ENCODE measurements at regions of chr3 and their contacts with region 1.

Region 1: DNA sequence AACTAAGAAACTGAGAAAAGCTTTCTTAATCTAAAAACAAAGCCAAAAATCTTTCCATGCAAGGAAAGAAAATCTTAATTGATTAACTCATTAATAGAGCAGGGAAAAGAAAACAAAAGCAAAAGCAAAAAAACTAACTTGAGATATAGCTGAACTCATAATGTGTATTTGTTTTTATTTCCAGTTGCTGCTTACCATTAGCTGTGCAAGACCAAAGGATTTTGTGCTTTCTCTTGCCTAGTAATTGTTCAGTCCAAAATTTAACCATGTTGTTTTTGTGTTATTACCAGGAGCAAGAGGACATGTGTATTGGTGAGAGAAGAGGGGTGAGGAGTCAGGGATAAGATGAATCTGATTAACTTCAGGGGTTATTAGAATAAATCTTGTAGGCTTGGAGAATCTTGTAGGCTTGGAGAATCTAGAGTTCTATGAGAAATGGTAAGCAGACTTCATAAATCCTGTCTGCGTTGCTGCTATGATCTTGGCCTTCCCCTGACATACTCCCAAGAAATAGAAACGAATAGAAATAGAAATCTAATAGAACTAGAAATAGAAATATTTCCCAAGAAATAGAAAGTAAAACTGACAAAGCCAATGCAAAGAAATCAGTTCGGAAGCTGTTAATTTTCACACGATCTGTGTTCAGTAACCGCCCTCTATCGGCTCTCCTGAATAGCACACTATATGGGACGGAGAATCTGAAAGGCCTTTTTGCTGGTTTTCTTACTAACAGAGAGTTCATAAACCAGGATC is 72.6 kb upstream of the TNFSF10 start:
- DNase-seq: peak in 9 of 14 experiments; percentile 10 to 82 (median 38)
- ATAC-seq: peak; percentile 66
- H3K4me3 ChIP-seq: peak overlapping the region; percentile 49
- H3K4me3 Mint-ChIP-seq: peak overlapping the region; percentile 89
- H3K27ac ChIP-seq: peak overlapping the region; percentile 38 to 51
- H3K27ac Mint-ChIP-seq: peak overlapping the region; percentile 83
- H3K4me1 ChIP-seq: peaks cover 40% of the 10 kb centered on the region
- H3K4me1 Mint-ChIP-seq: peaks cover 54% of the 10 kb centered on the region
- H3K27me3 ChIP-seq: no peaks in the 10 kb centered on the region
- H3K27me3 Mint-ChIP-seq: no peaks in the 10 kb centered on the region
- CTCF ChIP-seq: peak; percentile 90

Region 2: GRCh38 chr3:172332256-172333041 is 263.4 kb before region 1 on chr3:
- CTCF ChIA-PET with region 1: interaction called, 3 read pairs
- POLR2A ChIA-PET with region 1: no interaction called
- intact Hi-C with region 1: loop called in 1 of 2 experiments (anchors 5 kb)
- DNase-seq: peak; percentile 21 to 74 (median 40)
- ATAC-seq: peak; percentile 77
- H3K4me3 ChIP-seq: no peak overlapping the region
- H3K4me3 Mint-ChIP-seq: no peak overlapping the region
- H3K27ac ChIP-seq: no peak overlapping the region
- H3K27ac Mint-ChIP-seq: no peak overlapping the region
- H3K4me1 ChIP-seq: no peaks in the 10 kb centered on the region
- H3K4me1 Mint-ChIP-seq: peaks cover 6% of the 10 kb centered on the region
- H3K27me3 ChIP-seq: no peaks in the 10 kb centered on the region
- H3K27me3 Mint-ChIP-seq: no peaks in the 10 kb centered on the region
- CTCF ChIP-seq: peak; percentile 94

Region 3: DNA sequence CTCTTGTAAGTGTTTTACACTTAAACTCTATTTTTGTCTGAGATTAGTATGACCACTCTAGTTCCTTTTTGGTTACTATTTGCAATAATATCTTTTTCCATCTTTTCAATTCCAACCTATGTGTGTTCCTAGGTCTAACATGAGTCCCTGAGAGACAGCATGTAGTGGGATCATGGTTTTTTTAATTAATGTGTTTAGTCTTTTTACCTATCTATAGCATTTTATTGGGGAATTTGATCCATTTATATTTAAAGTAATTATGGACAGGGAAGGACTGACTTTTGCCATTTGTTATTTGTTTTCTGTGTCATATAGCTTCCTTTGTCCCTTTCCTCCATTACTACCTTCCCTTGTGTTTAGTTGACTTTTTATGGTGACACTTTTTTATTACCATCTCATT is 94.3 kb before region 1 on chr3:
- CTCF ChIA-PET with region 1: interaction called, 17 read pairs
- POLR2A ChIA-PET with region 1: interaction called, 7 read pairs
- intact Hi-C with region 1: no loop called
- DNase-seq: no peak
- ATAC-seq: no peak
- H3K4me3 ChIP-seq: no peak overlapping the region
- H3K4me3 Mint-ChIP-seq: no peak overlapping the region
- H3K27ac ChIP-seq: no peak overlapping the region
- H3K27ac Mint-ChIP-seq: no peak overlapping the region
- H3K4me1 ChIP-seq: no peaks in the 10 kb centered on the region
- H3K4me1 Mint-ChIP-seq: no peaks in the 10 kb centered on the region
- H3K27me3 ChIP-seq: no peaks in the 10 kb centered on the region
- H3K27me3 Mint-ChIP-seq: no peaks in the 10 kb centered on the region
- CTCF ChIP-seq: no peak

Region 4: DNA sequence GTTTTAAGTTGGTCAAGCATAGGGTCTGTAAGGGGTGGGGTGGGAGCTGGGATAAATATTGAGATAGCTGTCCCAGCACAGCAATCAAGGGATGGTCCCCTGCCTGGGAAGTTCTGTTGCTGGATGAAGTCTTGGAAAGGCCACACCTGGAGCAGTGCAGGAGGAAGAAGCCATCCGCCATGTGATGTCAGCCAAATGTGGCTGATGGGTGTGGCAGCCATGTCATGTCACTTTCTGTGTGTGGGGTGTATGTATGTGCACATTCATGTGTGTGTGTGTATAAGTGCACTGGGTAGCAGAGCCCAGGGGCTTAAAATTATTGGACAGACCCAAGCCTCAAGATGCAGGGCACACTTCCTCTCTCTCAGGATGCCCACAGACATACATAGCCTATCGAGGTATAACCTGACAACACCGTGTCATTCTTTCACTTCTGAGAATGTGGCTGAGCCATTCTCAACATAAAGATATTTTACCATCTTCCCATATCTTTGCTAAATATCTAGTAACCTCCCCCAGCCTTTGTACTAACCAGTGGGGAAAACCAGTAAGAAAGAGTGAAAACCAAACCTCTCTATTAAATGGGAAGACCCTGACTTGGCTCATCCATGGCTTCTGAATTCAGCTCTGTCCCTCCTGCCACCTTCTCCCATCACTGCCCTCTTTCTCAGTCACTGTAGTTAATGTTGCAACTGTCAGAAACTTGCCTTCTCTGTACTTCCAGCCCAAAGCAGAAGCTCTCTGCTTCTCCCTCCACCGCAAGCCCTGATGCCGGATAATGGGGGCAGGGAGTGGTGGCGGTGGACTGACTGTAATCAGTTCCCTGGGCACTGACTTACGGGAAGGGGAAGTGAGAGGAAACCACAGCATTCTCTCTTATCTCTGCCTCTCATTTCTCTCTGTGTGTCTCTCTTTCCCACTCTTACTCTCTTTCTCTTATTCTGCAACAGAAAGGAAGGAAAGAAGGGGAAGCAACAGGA is 83.7 kb before region 1 on chr3:
- CTCF ChIA-PET with region 1: interaction called, 11 read pairs
- POLR2A ChIA-PET with region 1: interaction called, 48 read pairs
- intact Hi-C with region 1: no loop called
- DNase-seq: peak in 12 of 14 experiments; percentile 36 to 80 (median 58)
- ATAC-seq: peak; percentile 64
- H3K4me3 ChIP-seq: peak overlapping the region; percentile 15
- H3K4me3 Mint-ChIP-seq: peak overlapping the region; percentile 67
- H3K27ac ChIP-seq: peak overlapping the region; percentile 57 to 67
- H3K27ac Mint-ChIP-seq: peak overlapping the region; percentile 93
- H3K4me1 ChIP-seq: peaks cover 63% of the 10 kb centered on the region
- H3K4me1 Mint-ChIP-seq: peaks cover 73% of the 10 kb centered on the region
- H3K27me3 ChIP-seq: no peaks in the 10 kb centered on the region
- H3K27me3 Mint-ChIP-seq: no peaks in the 10 kb centered on the region
- CTCF ChIP-seq: no peak

Region 5: GRCh38 chr3:172522871-172523818 is 72.7 kb before region 1 on chr3 and contains the start of gene TNFSF10:
- CTCF ChIA-PET with region 1: interaction called, 17 read pairs
- POLR2A ChIA-PET with region 1: interaction called, 40 read pairs
- intact Hi-C with region 1: no loop called
- DNase-seq: peak in 13 of 14 experiments; percentile 29 to 89 (median 53)
- ATAC-seq: peak; percentile 73
- H3K4me3 ChIP-seq: peak within 1 kb of the TSS; percentile 64
- H3K4me3 Mint-ChIP-seq: peak within 1 kb of the TSS; percentile 91
- H3K27ac ChIP-seq: peak within 1 kb of the TSS; percentile 57 to 65
- H3K27ac Mint-ChIP-seq: peak within 1 kb of the TSS; percentile 93
- H3K4me1 ChIP-seq: peaks cover 29% of the 10 kb centered on the region
- H3K4me1 Mint-ChIP-seq: peaks cover 70% of the 10 kb centered on the region
- H3K27me3 ChIP-seq: no peaks in the 10 kb centered on the region
- H3K27me3 Mint-ChIP-seq: no peaks in the 10 kb centered on the region
- CTCF ChIP-seq: no peak
- total RNA-seq, gene TNFSF10: 9.2 to 9.5 TPM

Region 6: DNA sequence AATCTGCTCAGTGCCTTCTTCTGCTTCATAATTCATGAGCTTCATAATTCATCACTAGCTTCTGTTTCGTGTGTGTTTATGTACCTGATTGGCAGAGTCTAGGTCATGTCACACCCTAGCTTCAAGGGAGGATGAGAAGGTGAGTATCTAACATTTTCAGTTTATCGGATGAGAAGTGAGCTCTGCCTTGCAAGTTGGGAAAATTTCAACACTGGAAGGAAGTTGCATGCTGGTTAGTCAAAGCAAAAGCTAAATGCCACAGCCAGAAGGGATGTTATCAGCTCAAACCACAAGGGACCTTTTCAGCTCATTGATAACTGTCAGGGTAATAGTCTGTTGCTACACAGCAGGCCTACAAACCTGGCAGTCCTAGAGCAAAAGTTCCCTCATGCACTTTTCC is 65.3 kb before region 1 on chr3:
- CTCF ChIA-PET with region 1: interaction called, 17 read pairs
- POLR2A ChIA-PET with region 1: interaction called, 5 read pairs
- intact Hi-C with region 1: no loop called
- DNase-seq: peak in 4 of 14 experiments; percentile 27 to 56 (median 55)
- ATAC-seq: peak; percentile 70
- H3K4me3 ChIP-seq: no peak overlapping the region
- H3K4me3 Mint-ChIP-seq: peak overlapping the region; percentile 46
- H3K27ac ChIP-seq: no peak overlapping the region
- H3K27ac Mint-ChIP-seq: peak overlapping the region; percentile 77
- H3K4me1 ChIP-seq: peaks cover 15% of the 10 kb centered on the region
- H3K4me1 Mint-ChIP-seq: peaks cover 31% of the 10 kb centered on the region
- H3K27me3 ChIP-seq: no peaks in the 10 kb centered on the region
- H3K27me3 Mint-ChIP-seq: no peaks in the 10 kb centered on the region
- CTCF ChIP-seq: no peak

Region 7: DNA sequence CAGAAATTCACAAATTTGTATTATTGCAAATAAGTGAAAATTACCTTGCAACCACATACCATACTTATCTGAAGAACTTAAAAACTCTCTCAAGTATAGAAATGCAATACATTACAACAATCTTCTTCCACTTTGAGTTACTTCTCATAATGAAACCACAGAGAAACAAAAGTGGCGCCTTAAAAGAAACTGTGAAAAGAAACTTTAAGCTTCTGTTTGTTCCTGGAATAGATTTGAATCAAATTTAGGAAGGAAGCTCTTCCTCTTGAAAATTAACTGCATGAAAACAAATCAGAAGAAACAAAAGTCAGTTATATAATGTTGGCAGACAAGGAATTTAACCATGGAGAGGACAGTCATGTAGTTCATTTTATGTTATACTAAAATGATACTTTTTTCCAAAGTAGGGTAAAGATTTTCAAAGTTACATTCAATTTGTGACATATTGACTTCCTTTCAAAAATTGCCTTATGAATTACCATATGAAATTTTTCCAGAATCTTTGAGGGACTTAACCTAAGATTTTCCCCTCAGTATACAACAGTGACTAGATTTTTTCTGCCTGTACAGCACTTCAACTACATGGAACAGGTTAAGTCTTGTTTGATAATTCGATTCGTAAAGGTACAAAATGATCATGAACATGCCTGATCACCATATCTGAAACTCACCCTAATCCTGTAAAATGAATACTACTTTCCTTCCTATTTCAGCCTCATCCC is 15.0 kb before region 1 on chr3:
- CTCF ChIA-PET with region 1: interaction called, 8 read pairs
- POLR2A ChIA-PET with region 1: interaction called, 10 read pairs
- intact Hi-C with region 1: no loop called
- DNase-seq: peak in 1 of 14 experiments; percentile 59
- ATAC-seq: no peak
- H3K4me3 ChIP-seq: peak overlapping the region; percentile 1
- H3K4me3 Mint-ChIP-seq: peak overlapping the region; percentile 32
- H3K27ac ChIP-seq: peak overlapping the region; percentile 35 to 44
- H3K27ac Mint-ChIP-seq: peak overlapping the region; percentile 85
- H3K4me1 ChIP-seq: peaks cover 31% of the 10 kb centered on the region
- H3K4me1 Mint-ChIP-seq: peaks cover 87% of the 10 kb centered on the region
- H3K27me3 ChIP-seq: no peaks in the 10 kb centered on the region
- H3K27me3 Mint-ChIP-seq: no peaks in the 10 kb centered on the region
- CTCF ChIP-seq: no peak

Region 8: GRCh38 chr3:172931746-172932285 is 336.0 kb after region 1 on chr3:
- CTCF ChIA-PET with region 1: no interaction called
- POLR2A ChIA-PET with region 1: no interaction called
- intact Hi-C with region 1: no loop called
- DNase-seq: no peak
- ATAC-seq: no peak
- H3K4me3 ChIP-seq: no peak overlapping the region
- H3K4me3 Mint-ChIP-seq: no peak overlapping the region
- H3K27ac ChIP-seq: no peak overlapping the region
- H3K27ac Mint-ChIP-seq: no peak overlapping the region
- H3K4me1 ChIP-seq: no peaks in the 10 kb centered on the region
- H3K4me1 Mint-ChIP-seq: no peaks in the 10 kb centered on the region
- H3K27me3 ChIP-seq: no peaks in the 10 kb centered on the region
- H3K27me3 Mint-ChIP-seq: no peaks in the 10 kb centered on the region
- CTCF ChIP-seq: no peak